ENCODE measurements at regions of chr12 and their contacts with region 1.

Region 1: DNA sequence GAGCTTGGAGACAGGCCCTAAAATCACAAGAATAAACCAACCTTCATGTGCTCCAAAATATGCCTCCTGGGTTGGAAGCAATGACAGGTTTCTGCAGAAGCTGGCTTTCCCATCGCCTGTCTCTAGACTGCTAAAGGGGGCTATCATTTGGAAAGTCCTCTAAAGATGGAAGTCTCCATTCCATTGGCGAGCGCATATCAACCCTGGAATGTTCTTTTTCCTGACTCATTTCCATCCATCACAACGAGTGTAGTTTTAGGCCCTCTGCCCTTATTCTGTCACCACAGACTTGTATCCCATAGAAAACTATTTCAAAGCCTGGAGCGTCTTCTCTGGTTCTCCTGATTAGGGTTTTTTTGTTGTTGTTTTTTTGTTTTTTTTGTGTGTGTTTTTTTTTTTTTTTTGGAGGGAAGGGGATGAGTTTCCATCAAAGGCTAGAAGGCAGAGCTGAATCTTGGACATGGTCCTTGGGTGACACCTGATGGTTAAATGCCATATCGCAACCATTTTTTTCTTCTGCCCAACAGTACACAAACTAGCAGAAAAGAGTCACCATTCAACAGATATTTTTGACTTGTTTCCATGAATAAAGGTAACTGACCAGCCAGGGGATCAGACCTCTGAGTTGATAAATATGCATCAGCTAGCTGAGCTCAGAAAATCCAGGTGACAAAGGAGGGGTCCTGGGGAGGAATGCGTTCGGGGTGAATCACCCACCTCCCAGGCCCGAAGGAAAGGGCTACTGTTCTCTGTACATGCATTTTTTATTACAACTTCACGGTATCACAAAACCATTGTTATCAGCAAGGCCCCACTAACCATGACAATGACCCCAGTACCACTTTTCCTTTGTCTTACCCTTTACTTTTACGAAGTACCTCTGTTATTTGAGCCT is 40.5 kb downstream of the KCNA5 start:
- DNase-seq: no peak
- ATAC-seq: peak; percentile 56

Region 2: DNA sequence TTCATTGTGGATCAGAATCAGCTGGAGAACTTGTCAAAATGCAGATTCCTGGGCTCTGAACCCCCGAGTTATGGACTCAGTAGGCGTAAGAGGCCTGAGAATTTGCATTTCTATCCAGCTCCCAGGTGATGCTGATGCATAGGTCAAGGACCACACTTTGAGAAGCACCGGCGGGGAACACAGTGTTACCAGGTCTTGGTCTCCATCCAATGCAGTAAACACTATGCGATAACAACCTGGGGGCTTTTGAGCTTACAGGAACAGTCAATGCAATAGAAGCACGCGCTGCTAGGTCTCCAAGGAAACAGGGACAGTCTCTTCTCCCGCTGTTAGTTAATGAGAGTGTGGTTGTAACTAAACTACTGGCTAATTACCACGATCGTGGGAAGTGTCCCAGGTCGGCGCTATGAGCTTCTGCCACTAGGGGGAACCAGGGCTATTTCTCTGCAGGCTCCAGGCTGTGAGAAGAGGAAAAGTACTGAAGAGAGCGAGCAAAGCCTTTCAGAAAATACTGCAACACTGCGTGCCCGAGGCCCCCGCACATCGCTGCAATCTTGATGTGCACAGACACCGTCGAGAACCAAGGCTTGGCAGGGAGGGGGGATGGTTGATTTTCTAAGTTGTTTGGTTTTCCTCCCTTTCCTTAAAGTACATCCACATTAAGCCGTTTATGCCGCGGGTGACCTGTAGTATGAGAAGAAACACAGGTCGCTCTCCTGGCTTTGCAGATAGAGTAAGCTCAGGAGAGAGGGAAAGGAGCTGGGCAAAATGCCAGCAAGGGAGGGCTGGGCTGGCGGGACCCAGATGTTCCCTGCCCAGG is 226.5 kb before region 1 on chr12:
- intact Hi-C with region 1: loop called in 1 of 2 experiments (anchors 5 kb)
- DNase-seq: peak; percentile 58 to 81
- ATAC-seq: peak; percentile 86

Region 3: DNA sequence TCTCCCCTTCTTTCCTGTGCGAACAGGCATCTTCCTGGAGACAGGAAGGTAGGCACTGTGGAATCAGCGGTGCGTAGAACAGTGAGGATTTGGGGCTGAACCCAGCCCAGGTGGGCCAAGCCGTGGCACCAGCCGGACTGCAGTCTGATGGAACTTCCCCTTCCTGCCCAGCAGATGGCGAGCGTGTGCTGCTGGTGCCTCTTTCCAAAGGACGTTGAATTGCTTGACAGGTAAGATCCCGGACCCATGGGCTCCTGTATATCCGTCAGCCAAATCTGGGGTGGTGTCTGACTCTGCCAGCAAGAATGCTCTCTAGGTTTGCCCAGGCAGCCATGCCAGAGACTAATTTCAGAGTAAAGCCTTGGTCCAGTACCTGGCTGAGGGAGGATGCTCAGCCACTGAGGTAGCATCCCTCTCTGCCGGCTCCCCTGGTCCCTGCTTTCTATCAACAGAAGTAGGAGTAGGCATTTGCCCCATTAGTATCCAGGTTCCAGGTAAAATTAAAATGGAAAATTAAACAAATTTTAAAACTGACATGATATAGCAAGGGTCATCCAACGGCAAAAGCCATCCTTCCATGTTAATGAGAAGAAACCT is 61.6 kb before region 1 on chr12:
- intact Hi-C with region 1: loop called in 1 of 2 experiments (anchors 2 kb)
- DNase-seq: peak in 1 of 2 donors; percentile 33
- ATAC-seq: peak; percentile 51

Region 4: GRCh38 chr12:5154091-5154490 is 69.9 kb after region 1 on chr12:
- intact Hi-C with region 1: no loop called
- DNase-seq: no peak
- ATAC-seq: no peak